ENCODE measurements at regions of chr2 and their contacts with region 1.

Region 1: DNA sequence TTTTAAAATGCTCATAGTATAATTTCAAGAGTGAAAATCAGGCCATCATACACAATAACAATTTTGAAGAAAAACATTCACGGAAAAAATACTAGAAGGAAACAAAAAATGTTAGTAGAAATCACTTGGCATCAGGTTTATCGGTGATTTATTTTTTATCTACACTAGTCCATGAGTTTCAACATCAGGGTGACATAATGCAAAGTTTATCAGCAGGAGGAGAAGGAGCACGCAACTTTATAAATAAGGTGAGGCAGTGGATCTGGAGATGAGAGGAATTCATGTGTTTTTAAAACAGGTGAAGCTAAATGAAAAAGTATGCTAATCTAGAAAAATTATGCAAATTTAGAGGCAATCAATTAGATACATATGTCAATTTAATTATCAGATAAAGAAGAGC is 54.2 kb downstream of the MGAT4A start:
- DNase-seq: no peak
- H3K4me3 ChIP-seq: no peak overlapping the region
- H3K27ac ChIP-seq: no peak overlapping the region
- H3K4me1 ChIP-seq: no peaks in the 10 kb centered on the region
- H3K27me3 ChIP-seq: no peaks in the 10 kb centered on the region
- CTCF ChIP-seq: no peak
- POLR2A ChIP-seq: no peak

Region 2: DNA sequence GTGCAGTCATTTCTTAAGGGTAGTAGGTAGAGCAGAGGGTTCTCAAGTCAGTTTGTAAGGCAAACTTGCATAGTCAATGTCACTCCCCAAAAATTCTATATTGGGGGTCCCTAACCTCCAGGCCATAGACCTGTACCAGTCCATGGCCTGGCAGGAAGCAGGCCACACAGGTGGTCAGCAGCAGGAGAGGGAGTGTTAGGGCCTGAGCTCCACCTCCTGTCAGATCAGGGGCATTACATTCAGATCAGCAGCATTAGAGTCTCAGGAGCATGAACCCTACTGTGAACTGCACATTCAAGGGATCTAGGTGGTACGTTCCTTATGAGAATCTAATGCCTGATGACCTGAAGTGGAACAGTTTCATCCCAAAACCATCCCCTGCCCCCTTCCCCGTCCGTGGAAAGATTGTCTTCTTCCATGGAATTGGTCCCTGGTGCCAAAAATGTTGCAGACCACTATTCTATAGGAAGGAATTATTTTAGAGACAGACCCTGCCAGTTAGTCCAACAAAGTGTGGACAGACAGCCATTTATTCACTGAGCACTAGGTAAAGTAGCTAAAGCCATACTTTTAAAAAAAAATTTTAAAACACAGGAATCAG is 75.1 kb before region 1 on chr2:
- intact Hi-C with region 1: no loop called
- DNase-seq: no peak
- H3K4me3 ChIP-seq: no peak overlapping the region
- H3K27ac ChIP-seq: no peak overlapping the region
- H3K4me1 ChIP-seq: peaks cover 0 to 4% of the 10 kb centered on the region in 2 donors
- H3K27me3 ChIP-seq: no peaks in the 10 kb centered on the region
- CTCF ChIP-seq: peak in 2 of 3 donors; percentile 30 to 41
- POLR2A ChIP-seq: no peak

Region 3: DNA sequence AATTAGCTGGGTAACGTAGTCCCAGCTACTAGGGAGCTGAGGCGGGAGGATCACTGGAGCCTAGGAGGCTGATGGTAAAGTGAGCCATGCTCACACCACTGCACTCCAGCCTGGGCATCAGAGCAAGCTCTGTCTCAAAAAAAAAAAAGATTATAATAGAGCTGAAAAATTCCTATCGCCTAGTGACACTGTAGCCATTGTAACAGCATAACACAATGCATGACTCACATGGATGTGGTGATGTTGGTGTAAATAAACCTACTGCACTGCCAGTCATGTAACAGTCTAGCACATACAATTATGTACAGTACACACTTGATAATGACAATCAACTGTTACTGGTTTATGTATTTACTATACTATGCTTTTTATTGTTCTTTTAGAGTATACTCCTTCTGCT is 14.6 kb after region 1 on chr2:
- intact Hi-C with region 1: no loop called
- DNase-seq: no peak
- H3K4me3 ChIP-seq: no peak overlapping the region
- H3K27ac ChIP-seq: no peak overlapping the region
- H3K4me1 ChIP-seq: no peaks in the 10 kb centered on the region
- H3K27me3 ChIP-seq: no peaks in the 10 kb centered on the region
- CTCF ChIP-seq: no peak
- POLR2A ChIP-seq: no peak

Region 4: DNA sequence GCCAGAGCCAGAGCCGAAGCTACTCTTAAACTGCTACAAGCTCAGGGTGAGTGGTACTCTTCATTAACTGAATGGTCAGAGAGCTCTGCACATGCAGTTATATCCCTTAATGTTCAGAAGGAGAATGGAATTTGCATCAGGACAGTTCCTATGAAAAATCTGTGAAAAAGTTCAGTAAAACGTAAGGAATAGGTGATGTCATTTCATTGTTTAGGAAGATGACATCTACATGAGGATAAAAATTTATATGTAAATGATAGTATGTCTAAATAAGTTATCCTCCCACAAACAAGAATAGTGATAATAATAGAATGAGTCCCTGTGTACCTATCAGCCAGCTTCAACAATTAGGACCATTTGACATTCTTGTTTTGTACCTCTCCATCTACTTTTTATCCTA is 687.6 kb after region 1 on chr2:
- intact Hi-C with region 1: loop called (anchors 5 kb)
- DNase-seq: no peak
- H3K4me3 ChIP-seq: no peak overlapping the region
- H3K27ac ChIP-seq: no peak overlapping the region
- H3K4me1 ChIP-seq: no peaks in the 10 kb centered on the region
- H3K27me3 ChIP-seq: no peaks in the 10 kb centered on the region
- CTCF ChIP-seq: no peak
- POLR2A ChIP-seq: no peak

Measured in breast epithelium (tissue), 4 donors.